ENCODE measurements at regions of chr11 and their contacts with region 1.

Region 1: DNA sequence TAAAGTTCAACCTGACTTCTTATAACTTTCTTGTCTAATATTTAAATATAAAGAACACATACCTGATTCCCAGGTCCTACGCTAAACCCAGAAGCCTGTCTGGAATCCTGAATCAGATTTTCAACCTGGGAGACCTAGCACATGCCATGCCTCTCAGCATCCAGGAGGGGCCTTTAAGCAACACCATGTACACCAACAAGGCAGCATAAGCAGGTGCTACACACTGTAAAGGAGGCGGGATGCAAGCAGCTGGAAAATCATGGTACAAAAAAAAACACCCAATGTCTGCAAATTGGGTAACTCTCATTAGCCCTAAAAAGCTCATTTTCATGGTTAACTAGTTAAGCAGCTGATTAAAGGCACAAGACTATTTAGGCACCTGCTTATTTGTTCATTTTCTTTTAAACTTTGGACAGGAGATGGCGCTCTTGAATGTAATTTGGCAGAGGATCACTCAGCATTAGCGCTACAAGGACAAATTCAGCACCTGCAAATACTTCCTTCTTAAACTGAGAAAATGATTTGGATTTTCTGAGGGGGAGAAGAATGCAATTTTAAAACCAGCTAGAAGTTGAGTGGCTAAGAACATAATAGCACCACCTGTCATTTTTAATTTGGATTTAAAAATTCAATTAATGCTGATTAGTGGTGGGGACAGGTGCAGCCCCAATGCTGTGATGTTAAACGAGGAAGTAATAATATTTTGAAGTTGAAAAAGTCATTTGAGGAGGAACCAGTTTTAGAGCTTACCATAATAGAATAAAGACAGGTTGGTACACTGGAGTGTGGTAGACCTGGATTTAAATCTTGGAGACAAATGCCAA is 104.0 kb downstream of the FAR1 start:
- DNase-seq: peak in 4 of 5 donors; percentile 72 to 78 (median 73)
- H3K4me3 ChIP-seq: no peak overlapping the region
- H3K4me3 Mint-ChIP-seq: no peak overlapping the region
- H3K27ac ChIP-seq: no peak overlapping the region
- H3K27ac Mint-ChIP-seq: no peak overlapping the region
- H3K4me1 ChIP-seq: no peaks in the 10 kb centered on the region
- H3K4me1 Mint-ChIP-seq: peaks cover 2 to 6% (median 5%) of the 10 kb centered on the region in 4 donors
- H3K27me3 ChIP-seq: no peaks in the 10 kb centered on the region
- H3K27me3 Mint-ChIP-seq: peaks cover 4% of the 10 kb centered on the region in 2 donors

Region 2: DNA sequence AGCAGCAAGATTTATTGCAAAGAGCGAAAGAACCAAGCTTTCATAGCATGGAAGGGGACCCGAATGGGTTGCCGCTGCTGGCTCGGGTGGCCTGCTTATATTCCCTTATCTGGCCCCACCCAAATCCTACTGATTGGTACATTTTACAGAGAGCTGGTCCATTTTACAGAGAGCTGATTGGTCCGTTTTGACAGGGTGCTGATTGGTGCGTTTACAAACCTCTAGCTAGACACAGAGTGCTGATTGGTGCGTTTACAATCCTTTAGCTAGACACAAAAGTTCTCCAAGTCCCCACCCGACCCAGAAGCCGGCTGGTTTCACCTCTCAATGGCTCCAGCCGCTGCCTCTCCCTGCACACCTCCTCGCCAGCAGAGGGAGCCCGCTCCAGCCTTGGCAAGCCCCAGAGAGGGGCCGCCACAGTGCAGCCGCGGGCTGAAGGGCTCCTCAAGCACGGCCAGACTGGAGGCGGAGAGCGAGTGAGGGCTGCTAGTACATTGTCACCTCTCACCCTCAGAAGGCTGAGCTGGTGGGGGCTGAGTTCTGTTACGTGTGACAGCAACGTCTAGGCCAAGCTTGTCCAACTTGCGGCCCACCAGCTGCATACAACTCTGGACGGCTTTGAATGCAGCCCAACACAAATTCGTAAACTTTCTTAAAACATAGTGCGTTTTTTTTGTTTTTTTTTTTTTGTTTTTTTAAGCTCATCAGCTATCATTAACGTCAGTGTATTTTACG is 285.3 kb before region 1 on chr11:
- CTCF ChIA-PET with region 1: interaction called, 10 read pairs
- POLR2A ChIA-PET with region 1: no interaction called
- intact Hi-C with region 1: no loop called
- DNase-seq: peak; percentile 54 to 72 (median 60)
- H3K4me3 ChIP-seq: peak overlapping the region in 1 of 2 donors; percentile 23
- H3K4me3 Mint-ChIP-seq: peak overlapping the region; percentile 73 to 90 (median 83)
- H3K27ac ChIP-seq: peak overlapping the region; percentile 21
- H3K27ac Mint-ChIP-seq: peak overlapping the region in 4 of 7 donors; percentile 3 to 92 (median 48)
- H3K4me1 ChIP-seq: no peaks in the 10 kb centered on the region
- H3K4me1 Mint-ChIP-seq: peaks cover 6 to 11% (median 6%) of the 10 kb centered on the region in 4 donors
- H3K27me3 ChIP-seq: no peaks in the 10 kb centered on the region
- H3K27me3 Mint-ChIP-seq: peaks cover 5 to 11% of the 10 kb centered on the region in 2 donors

Region 3: DNA sequence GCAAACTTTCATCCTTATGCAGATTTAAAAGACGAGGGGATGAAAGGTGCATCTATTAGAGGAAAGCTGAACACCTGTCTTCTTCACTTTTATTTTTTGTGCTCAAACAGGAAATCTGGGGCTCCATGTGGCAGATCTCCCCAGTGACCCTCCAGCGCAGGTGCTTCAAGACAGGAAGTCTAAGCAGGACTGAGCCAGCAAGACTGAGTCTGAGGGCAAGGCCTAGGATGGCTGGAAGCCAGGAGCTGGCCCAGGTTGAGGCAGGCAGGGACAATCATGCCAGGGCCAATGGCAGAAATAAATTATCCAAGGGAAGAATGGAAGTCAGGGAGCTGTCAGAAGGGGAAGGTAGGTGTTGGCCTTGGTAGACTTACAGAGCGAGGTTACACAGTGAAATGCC is 89.0 kb after region 1 on chr11:
- CTCF ChIA-PET with region 1: interaction called, 22 read pairs
- POLR2A ChIA-PET with region 1: no interaction called
- intact Hi-C with region 1: loop called (anchors 5 kb)
- DNase-seq: peak in 3 of 5 donors; percentile 16 to 25 (median 24)
- H3K4me3 ChIP-seq: no peak overlapping the region
- H3K4me3 Mint-ChIP-seq: peak overlapping the region in 7 of 8 donors; percentile 2 to 64 (median 33)
- H3K27ac ChIP-seq: no peak overlapping the region
- H3K27ac Mint-ChIP-seq: peak overlapping the region; percentile 37 to 90 (median 83)
- H3K4me1 ChIP-seq: peaks cover 23% of the 10 kb centered on the region
- H3K4me1 Mint-ChIP-seq: peaks cover 18 to 35% (median 31%) of the 10 kb centered on the region in 4 donors
- H3K27me3 ChIP-seq: no peaks in the 10 kb centered on the region
- H3K27me3 Mint-ChIP-seq: no peaks in the 10 kb centered on the region

Region 4: GRCh38 chr11:13955971-13956421 is 183.6 kb after region 1 on chr11:
- CTCF ChIA-PET with region 1: interaction called, 47 read pairs
- POLR2A ChIA-PET with region 1: interaction called, 6 read pairs
- intact Hi-C with region 1: loop called (anchors 1 kb)
- DNase-seq: peak; percentile 54 to 65 (median 57)
- H3K4me3 ChIP-seq: no peak overlapping the region
- H3K4me3 Mint-ChIP-seq: no peak overlapping the region
- H3K27ac ChIP-seq: no peak overlapping the region
- H3K27ac Mint-ChIP-seq: no peak overlapping the region
- H3K4me1 ChIP-seq: peaks cover 11% of the 10 kb centered on the region
- H3K4me1 Mint-ChIP-seq: peaks cover 0 to 3% (median 1%) of the 10 kb centered on the region in 4 donors
- H3K27me3 ChIP-seq: peaks cover 3% of the 10 kb centered on the region
- H3K27me3 Mint-ChIP-seq: peaks cover 8 to 11% of the 10 kb centered on the region in 2 donors

Region 5: GRCh38 chr11:13970986-13971385 is 198.6 kb after region 1 on chr11:
- CTCF ChIA-PET with region 1: interaction called, 24 read pairs
- POLR2A ChIA-PET with region 1: no interaction called
- intact Hi-C with region 1: no loop called
- DNase-seq: no peak
- H3K4me3 ChIP-seq: no peak overlapping the region
- H3K4me3 Mint-ChIP-seq: no peak overlapping the region
- H3K27ac ChIP-seq: no peak overlapping the region
- H3K27ac Mint-ChIP-seq: peak overlapping the region in 4 of 7 donors; percentile 2 to 58 (median 33)
- H3K4me1 ChIP-seq: no peaks in the 10 kb centered on the region
- H3K4me1 Mint-ChIP-seq: peaks cover 0 to 9% (median 7%) of the 10 kb centered on the region in 4 donors
- H3K27me3 ChIP-seq: no peaks in the 10 kb centered on the region
- H3K27me3 Mint-ChIP-seq: peaks cover 5 to 6% of the 10 kb centered on the region in 2 donors

Region 6: GRCh38 chr11:14249121-14249963 is 476.9 kb after region 1 on chr11:
- CTCF ChIA-PET with region 1: interaction called, 299 read pairs
- POLR2A ChIA-PET with region 1: interaction called, 7 read pairs
- intact Hi-C with region 1: loop called (anchors 1 kb)
- DNase-seq: peak; percentile 56 to 69 (median 63)
- H3K4me3 ChIP-seq: peak overlapping the region in 1 of 2 donors; percentile 42
- H3K4me3 Mint-ChIP-seq: peak overlapping the region; percentile 68 to 87 (median 72)
- H3K27ac ChIP-seq: no peak overlapping the region
- H3K27ac Mint-ChIP-seq: peak overlapping the region in 5 of 7 donors; percentile 6 to 50 (median 38)
- H3K4me1 ChIP-seq: peaks cover 18% of the 10 kb centered on the region
- H3K4me1 Mint-ChIP-seq: peaks cover 21 to 28% (median 24%) of the 10 kb centered on the region in 4 donors
- H3K27me3 ChIP-seq: no peaks in the 10 kb centered on the region
- H3K27me3 Mint-ChIP-seq: no peaks in the 10 kb centered on the region

Region 7: DNA sequence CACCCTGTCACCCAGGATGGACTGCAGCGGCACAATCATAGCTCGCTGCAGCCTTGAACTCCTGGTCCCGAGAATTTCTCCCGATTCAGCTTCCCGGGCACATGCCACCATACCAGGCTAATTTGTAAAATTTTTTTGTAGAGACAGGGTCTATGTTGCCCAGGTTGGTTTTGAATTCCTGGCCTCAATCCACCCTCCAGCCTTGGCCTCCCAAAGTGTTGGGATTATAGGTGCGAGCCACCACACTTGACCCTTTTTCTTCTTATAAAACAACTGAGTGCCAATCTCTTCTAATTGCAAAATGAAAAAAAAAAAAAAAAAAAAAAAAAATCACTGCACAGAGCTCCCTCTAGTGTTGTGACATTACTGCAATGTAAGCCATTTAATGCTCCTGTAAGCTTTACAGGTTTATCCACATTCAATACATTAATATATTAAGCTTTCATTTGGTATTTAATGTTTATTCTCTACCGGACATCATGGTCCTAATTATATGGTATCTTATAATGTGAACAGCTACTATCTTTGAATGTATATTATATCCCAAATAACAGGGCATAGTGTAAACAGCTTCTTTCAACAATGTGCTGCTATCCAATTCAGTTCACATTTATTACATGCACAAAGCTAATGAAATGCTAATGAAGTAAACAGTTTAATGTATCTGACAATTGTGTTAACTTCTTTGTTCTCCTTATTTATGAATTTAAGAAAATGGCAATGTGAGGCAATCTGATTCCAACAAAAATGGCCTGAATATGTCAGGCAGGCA is 682.6 kb after region 1 on chr11:
- CTCF ChIA-PET with region 1: interaction called, 58 read pairs
- POLR2A ChIA-PET with region 1: no interaction called
- intact Hi-C with region 1: loop called (anchors 1 kb)
- DNase-seq: peak in 4 of 5 donors; percentile 14 to 29 (median 18)
- H3K4me3 ChIP-seq: no peak overlapping the region
- H3K4me3 Mint-ChIP-seq: no peak overlapping the region
- H3K27ac ChIP-seq: no peak overlapping the region
- H3K27ac Mint-ChIP-seq: peak overlapping the region in 4 of 7 donors; percentile 22 to 63 (median 41)
- H3K4me1 ChIP-seq: no peaks in the 10 kb centered on the region
- H3K4me1 Mint-ChIP-seq: peaks cover 0 to 3% (median 1%) of the 10 kb centered on the region in 4 donors
- H3K27me3 ChIP-seq: no peaks in the 10 kb centered on the region
- H3K27me3 Mint-ChIP-seq: no peaks in the 10 kb centered on the region

Measured in CD4-positive, alpha-beta memory T cell (primary cell).